Psoas muscle (tissue), 8 donors: ENCODE measurements at regions of chr4 and their contacts with region 1.

Region 1: DNA sequence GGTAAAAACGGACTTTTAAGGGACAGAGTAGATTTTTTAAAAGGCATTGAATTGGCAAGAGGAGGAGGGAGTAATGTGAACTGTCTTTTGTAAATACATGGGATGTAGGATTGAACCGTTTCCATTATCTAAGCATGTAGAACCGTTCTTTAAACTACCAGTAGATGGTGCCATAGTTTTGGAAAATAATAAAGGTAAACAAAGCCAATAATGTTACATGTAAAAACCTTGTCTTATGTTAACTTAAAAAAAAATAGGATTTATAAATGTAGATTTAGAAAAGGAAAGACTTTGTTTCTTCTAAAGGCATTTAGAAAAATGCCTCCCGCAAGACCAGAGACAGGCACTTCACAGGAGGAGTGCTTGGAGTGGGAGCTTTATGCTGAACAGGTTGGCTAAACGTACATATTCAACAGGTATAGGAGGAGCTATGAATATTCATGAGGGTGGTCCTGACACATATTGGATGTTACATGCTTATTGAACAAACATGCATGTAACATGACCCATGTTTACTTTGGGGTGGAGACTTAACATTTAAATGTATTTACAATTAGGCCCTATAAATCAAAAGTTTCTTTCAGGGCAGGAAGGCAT is 45.5 kb upstream of the FAM241A start:
- DNase-seq: no peak
- ATAC-seq: peak in 3 of 4 donors; percentile 68 to 88 (median 68)
- H3K4me3 ChIP-seq: no peak overlapping the region
- H3K27ac ChIP-seq: no peak overlapping the region
- H3K4me1 ChIP-seq: no peaks in the 10 kb centered on the region
- H3K27me3 ChIP-seq: no peaks in the 10 kb centered on the region
- CTCF ChIP-seq: peak; percentile 72

Region 2: GRCh38 chr4:112145326-112145819 is 45.6 kb after region 1 on chr4 and contains the start of gene FAM241A:
- intact Hi-C with region 1: loop called in 1 of 2 experiments (anchors 5 kb)
- DNase-seq: peak; percentile 88 to 92
- ATAC-seq: peak; percentile 98 to 99 (median 98)
- H3K4me3 ChIP-seq: peak within 1 kb of the TSS; percentile 94
- H3K27ac ChIP-seq: peak within 1 kb of the TSS; percentile 88
- H3K4me1 ChIP-seq: peaks cover 11% of the 10 kb centered on the region
- H3K27me3 ChIP-seq: no peaks in the 10 kb centered on the region
- CTCF ChIP-seq: no peak
- total RNA-seq, gene FAM241A: 2.6 to 4.8 (median 3.8) TPM

Region 3: DNA sequence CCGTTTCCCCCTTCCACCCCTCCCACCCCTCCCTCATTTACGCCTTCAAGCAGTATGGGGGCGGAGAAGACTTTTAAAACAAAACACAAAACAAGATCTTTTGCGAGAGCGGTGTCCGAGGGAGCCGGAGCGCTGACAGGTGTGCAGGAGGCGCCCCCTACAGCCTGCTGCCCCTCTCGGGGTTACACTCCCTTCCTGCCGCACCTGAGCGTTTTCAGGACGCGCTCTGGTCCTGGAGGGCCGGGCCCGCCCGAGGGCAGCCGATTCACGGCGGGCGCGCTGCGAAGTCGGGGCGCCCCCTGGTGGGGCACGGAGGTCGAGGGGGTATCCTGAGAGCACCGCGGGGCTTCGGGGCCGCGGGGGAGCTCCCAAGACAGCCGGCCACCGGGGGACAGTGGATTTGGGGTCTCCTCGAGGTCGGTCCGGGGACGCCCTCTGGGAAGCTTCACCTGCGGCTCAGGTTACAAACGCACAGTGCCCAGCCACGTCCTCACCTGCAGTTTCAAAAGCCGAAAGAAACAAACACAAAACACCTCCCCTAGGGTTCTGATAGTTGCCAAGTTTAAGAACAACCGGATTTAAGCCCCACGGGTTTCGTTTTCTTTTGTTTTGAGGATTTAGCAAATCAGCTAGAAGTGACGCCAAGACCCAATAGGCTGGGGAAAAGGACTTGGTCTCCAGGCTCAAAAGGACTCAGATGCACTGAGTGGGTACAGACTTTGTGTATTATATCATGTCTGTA is 424.1 kb after region 1 on chr4:
- intact Hi-C with region 1: loop called in 1 of 2 experiments (anchors 10 kb)
- DNase-seq: peak; percentile 44 to 76
- ATAC-seq: peak; percentile 71 to 95 (median 82)
- H3K4me3 ChIP-seq: peak overlapping the region; percentile 55
- H3K27ac ChIP-seq: no peak overlapping the region
- H3K4me1 ChIP-seq: peaks cover 2% of the 10 kb centered on the region
- H3K27me3 ChIP-seq: peaks cover 0 to 66% (median 36%) of the 10 kb centered on the region in 3 donors
- CTCF ChIP-seq: peak; percentile 71